Activated naive CD4-positive, alpha-beta T cell treated with anti-CD3 and anti-CD28 coated beads, Interleukin-2, amount 10 ng/mL, durations not matched to agents 7 days and 5 days (primary cell): ENCODE measurements at regions of chr1 and their contacts with region 1.

Region 1: GRCh38 chr1:203625628-203626019 is 1.0 kb upstream of the ATP2B4 start:
- DNase-seq: peak; percentile 76
- H3K4me3 Mint-ChIP-seq: peak overlapping the region; percentile 96
- H3K27ac Mint-ChIP-seq: peak overlapping the region; percentile 95
- H3K4me1 Mint-ChIP-seq: peaks cover 64% of the 10 kb centered on the region
- H3K27me3 Mint-ChIP-seq: no peaks in the 10 kb centered on the region

Region 2: DNA sequence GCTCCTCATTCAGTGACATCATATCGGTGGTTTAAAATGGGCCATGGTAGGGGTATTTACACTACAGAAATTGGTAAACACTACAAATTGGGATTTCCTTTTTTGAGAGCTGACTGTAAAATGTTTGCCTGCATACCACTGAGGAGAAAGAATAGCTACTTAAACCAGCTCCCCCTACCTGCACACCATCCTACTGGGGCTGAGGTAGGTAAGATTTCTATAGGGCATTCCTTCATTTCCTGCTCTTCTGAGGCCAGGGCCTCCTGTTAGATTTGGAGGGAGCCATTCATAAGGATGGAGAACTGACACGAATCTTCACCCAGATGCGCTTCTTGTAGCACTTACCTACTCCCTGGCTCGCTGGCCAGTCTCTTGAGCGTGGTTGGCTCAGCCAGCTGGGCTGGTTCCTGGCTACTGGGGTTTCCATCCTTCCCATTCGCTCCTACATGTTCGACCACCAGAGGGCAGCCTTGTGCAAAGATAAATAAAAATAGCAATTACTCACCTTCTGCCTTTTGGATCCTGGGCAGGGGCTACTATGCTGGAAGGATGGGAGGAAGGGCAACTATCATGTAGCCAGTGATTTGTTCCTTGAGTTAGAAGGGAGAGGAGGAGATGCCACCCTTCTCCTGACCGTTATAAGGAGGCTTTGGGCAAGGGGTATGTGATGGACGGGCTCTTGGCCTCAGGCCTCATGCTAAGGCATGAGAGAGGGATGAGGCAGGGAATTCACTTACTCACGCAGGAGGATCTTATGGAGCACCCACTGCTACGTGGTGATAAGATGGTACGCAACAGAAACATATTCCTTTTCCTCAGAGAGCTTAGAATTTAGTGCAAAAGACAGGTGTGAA is 121.0 kb before region 1 on chr1:
- CTCF ChIA-PET with region 1: interaction called, 16 read pairs
- DNase-seq: peak; percentile 85
- H3K4me3 Mint-ChIP-seq: no peak overlapping the region
- H3K27ac Mint-ChIP-seq: no peak overlapping the region
- H3K4me1 Mint-ChIP-seq: no peaks in the 10 kb centered on the region
- H3K27me3 Mint-ChIP-seq: peaks cover 29% of the 10 kb centered on the region

Region 3: GRCh38 chr1:203609979-203610493 is 15.6 kb before region 1 on chr1:
- CTCF ChIA-PET with region 1: interaction called, 57 read pairs
- DNase-seq: no peak
- H3K4me3 Mint-ChIP-seq: no peak overlapping the region
- H3K27ac Mint-ChIP-seq: no peak overlapping the region
- H3K4me1 Mint-ChIP-seq: peaks cover 77% of the 10 kb centered on the region
- H3K27me3 Mint-ChIP-seq: no peaks in the 10 kb centered on the region

Region 4: GRCh38 chr1:203673550-203674427 is 48.2 kb after region 1 on chr1:
- CTCF ChIA-PET with region 1: interaction called, 28 read pairs
- DNase-seq: peak; percentile 82
- H3K4me3 Mint-ChIP-seq: peak overlapping the region; percentile 49
- H3K27ac Mint-ChIP-seq: peak overlapping the region; percentile 95
- H3K4me1 Mint-ChIP-seq: peaks cover 58% of the 10 kb centered on the region
- H3K27me3 Mint-ChIP-seq: no peaks in the 10 kb centered on the region

Region 5: GRCh38 chr1:203692565-203693470 is 67.2 kb after region 1 on chr1:
- CTCF ChIA-PET with region 1: interaction called, 11 read pairs
- DNase-seq: no peak
- H3K4me3 Mint-ChIP-seq: no peak overlapping the region
- H3K27ac Mint-ChIP-seq: no peak overlapping the region
- H3K4me1 Mint-ChIP-seq: peaks cover 24% of the 10 kb centered on the region
- H3K27me3 Mint-ChIP-seq: no peaks in the 10 kb centered on the region